ENCODE measurements at regions of chr9 and their contacts with region 1.

Region 1: DNA sequence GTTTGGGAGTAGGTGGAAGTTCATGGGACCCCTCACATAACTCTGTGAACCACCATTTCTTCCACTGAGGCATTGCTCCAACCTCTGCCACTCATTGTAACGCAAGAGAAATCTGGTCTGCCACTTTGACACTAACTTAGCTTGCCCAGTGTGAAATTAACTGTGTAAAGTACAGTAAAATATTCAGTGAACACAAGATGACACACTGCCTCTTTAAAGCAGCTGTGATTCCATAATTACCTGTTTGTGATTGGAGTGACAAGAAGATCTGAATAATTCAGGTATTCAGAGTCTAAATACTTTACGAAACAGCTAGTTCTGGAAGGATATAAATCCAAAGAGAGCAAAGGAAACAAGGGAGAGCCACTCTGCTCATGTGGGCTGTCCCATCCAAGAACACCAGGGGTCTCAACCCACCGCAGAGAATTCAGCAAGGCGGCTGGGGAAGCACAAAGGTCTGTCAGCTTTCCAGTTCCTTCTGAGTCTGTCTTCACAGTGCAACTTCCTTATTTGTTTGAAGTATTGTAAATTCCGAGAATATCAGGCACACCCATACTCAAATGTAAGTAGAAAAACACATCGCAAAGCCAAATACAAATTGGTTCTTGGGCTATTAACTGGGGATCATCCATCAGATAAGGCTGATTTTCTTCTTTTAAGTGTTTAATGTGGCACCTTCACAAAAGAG is 86.9 kb downstream of the GNAQ start:
- DNase-seq: peak; percentile 79 to 93 (median 90)
- H3K4me3 ChIP-seq: peak overlapping the region in 4 of 7 experiments; percentile 42 to 58 (median 56)
- H3K27ac ChIP-seq: peak overlapping the region; percentile 40 to 71
- H3K4me1 ChIP-seq: peaks cover 27 to 81% (median 55%) of the 10 kb centered on the region in 4 experiments
- H3K27me3 ChIP-seq: no peaks in the 10 kb centered on the region

Region 2: GRCh38 chr9:77864211-77864889 is 80.3 kb before region 1 on chr9:
- CTCF ChIA-PET with region 1: interaction called, 15 read pairs
- POLR2A ChIA-PET with region 1: no interaction called
- DNase-seq: peak; percentile 86 to 96 (median 93)
- H3K4me3 ChIP-seq: no peak overlapping the region
- H3K27ac ChIP-seq: peak overlapping the region in 1 of 2 experiments; percentile 23
- H3K4me1 ChIP-seq: peaks cover 14 to 22% (median 19%) of the 10 kb centered on the region in 4 experiments
- H3K27me3 ChIP-seq: no peaks in the 10 kb centered on the region

Region 3: DNA sequence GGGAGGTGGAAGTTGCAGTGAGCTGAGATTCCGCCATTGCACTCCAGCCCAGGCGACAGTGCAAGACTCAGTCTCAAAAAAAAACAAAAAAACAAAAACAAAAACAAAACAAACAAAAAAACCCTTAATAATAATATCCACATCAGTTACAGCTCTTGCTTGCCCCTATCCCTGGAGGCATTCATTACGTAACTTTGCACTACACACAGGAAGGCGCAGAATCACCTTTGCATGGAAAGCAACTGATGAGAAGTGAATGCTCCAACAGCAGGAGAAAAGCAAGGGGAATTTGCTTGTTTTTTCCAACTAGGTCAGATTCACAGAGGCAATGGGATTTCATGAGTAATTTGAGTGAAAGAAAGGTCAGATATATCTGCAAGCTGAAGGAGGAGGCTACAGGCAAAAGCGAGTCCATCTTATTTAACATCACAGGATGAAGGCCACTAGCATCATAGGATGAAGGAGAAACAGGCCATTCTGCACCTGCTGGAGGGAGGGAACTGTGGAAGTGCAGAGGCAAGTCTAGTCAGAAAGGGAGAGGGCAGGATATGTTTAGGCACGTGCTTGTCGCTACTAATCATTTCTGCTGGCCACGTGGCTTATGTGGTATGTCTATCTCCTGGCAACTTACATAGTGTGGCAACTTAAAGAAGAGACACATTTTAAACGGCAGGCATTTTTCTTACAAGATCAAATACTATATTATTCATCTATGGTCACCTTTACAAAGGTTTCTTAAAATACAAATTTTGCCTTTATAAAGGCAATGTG is 12.8 kb after region 1 on chr9:
- CTCF ChIA-PET with region 1: interaction called, 12 read pairs
- POLR2A ChIA-PET with region 1: interaction called, 3 read pairs
- DNase-seq: peak in 2 of 3 donors; percentile 45 to 63
- H3K4me3 ChIP-seq: no peak overlapping the region
- H3K27ac ChIP-seq: peak overlapping the region in 1 of 2 experiments; percentile 15
- H3K4me1 ChIP-seq: peaks cover 40 to 82% (median 63%) of the 10 kb centered on the region in 4 experiments
- H3K27me3 ChIP-seq: no peaks in the 10 kb centered on the region

Region 4: DNA sequence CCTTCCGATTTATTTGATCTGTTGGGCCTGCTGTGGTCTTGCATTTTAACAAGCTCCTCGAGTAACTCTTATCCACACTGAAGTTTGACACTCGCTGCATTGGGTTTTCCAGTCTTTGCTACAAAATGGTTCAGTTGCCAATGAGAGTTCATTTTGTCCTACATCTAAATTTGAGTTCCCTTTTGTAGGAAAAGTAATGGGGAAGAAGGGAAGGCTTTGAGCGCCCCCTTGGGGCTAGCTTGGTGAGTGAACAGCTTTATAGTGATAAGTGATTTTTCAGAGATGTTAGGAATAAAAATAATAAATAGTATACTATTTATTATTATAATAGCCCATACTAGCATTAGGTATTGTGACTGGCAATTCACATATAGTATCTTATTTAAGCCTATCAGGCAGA is 176.8 kb after region 1 on chr9:
- CTCF ChIA-PET with region 1: interaction called, 10 read pairs
- POLR2A ChIA-PET with region 1: no interaction called
- DNase-seq: peak; percentile 69 to 82 (median 70)
- H3K4me3 ChIP-seq: no peak overlapping the region
- H3K27ac ChIP-seq: no peak overlapping the region
- H3K4me1 ChIP-seq: peaks cover 0 to 13% (median 2%) of the 10 kb centered on the region in 4 experiments
- H3K27me3 ChIP-seq: no peaks in the 10 kb centered on the region